Common myeloid progenitor, CD34-positive (primary cell): ENCODE measurements at regions of chr16 and their contacts with region 1.

Region 1: DNA sequence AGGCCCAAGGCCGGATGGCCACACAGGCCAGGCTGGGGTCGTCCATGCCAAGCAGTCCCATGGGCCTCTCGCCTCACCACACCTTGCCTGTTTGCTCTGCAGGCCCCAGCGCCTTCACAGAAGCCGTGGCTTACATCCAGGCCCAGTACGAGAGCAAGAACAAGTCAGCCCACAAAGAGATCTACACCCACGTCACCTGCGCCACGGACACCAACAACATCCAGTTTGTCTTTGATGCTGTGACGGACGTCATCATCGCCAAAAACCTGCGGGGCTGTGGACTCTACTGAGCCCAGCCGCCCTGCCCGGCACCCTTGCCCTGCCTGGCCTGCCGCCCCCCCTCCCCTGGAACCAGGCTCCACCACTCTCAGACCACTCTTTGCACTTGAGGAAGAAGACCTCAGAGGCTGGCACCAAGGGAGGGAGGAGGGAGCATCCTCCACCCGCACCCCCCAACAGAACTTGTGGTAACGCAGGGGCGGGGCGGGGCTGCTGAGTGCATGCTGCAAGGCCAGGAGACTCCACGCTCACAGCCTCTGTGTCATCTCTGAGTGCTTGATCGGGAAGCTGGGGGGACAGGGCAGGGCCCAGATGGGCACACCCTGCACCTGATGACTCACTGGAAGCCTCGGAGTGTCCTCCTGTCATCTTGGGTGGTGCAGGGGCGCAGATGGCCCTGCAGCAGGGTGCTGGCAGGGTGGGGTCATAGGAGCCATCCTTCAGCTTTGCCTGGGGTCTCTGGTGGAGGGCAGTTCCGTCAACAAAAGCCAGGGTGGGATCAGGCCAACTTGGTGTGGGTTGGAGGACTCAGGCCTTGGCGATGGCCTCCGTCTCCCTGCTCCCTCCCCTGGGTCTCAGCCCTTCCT is 81.5 kb downstream of the AMFR start:
- DNase-seq: no peak
- H3K4me3 ChIP-seq: no peak overlapping the region
- H3K27ac ChIP-seq: no peak overlapping the region
- H3K4me1 ChIP-seq: no peaks in the 10 kb centered on the region
- H3K27me3 ChIP-seq: no peaks in the 10 kb centered on the region

Region 2: GRCh38 chr16:56356276-56357240 is 12.7 kb after region 1 on chr16:
- CTCF ChIA-PET with region 1: interaction called, 11 read pairs
- POLR2A ChIA-PET with region 1: no interaction called
- DNase-seq: peak; percentile 59 to 80 (median 74)
- H3K4me3 ChIP-seq: peak overlapping the region in 6 of 7 experiments; percentile 56 to 87 (median 77)
- H3K27ac ChIP-seq: peak overlapping the region in 1 of 2 experiments; percentile 68
- H3K4me1 ChIP-seq: peaks cover 5 to 28% (median 12%) of the 10 kb centered on the region in 4 experiments
- H3K27me3 ChIP-seq: no peaks in the 10 kb centered on the region